H1 (cell line): ENCODE measurements at regions of chr2 and their contacts with region 1.

Region 1: GRCh38 chr2:96951093-96951654 is 35.2 kb downstream of the FAM178B start:
- DNase-seq: peak; percentile 75 to 90
- H3K4me3 ChIP-seq: no peak overlapping the region
- H3K27ac ChIP-seq: no peak overlapping the region
- H3K4me1 ChIP-seq: peaks cover 0 to 5% (median 2%) of the 10 kb centered on the region in 4 experiments; a peak in 4 of 7 replicates
- H3K27me3 ChIP-seq: peaks cover 0 to 5% (median 1%) of the 10 kb centered on the region in 4 experiments; a peak in 3 of 7 replicates
- CTCF ChIP-seq: peak; percentile 96 to 99 (median 96)
- EP300 ChIP-seq: no peak
- POLR2A ChIP-seq: no peak
- RAD21 ChIP-seq: peak; percentile 97 to 99

Region 2: DNA sequence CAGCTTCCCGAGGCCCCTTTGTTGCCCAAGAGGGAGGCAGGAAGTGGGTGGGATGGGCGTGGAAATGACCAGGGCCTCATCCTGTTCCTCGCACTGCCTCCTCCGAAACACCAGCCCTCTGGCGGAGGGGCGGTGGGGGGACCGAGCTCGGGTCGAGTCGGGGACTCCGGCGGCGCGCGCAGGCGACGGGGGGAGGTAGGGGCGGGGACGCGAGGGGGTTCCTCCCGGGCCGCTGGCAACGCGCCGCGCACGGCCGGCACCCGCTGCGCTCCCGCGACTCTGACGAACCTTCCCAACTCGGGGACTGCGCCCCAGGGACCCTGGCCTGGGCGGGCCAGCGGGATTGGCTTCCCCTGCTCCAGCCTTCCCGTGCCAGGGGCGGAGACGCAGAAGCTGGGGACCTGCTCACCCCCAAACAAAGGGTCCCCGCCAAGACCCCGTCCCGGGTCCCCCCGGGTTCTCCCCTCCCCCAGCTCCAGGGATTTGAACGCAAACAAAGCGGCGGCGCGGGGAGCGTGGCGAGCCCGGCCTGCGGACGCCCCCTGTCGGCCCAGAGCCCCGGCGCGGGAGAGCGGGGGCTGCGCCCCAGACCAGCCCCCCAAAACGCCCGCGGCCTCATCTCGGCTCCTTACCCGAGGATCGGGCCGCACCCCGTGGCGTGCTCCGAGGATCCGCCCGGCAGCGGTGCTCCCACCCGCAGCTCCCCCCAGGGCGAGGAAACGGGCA is 82.5 kb before region 1 on chr2:
- CTCF ChIA-PET with region 1: interaction called, 47 read pairs
- POLR2A ChIA-PET with region 1: interaction called, 6 read pairs
- DNase-seq: peak; percentile 43 to 86
- H3K4me3 ChIP-seq: peak overlapping the region; percentile 76 to 86 (median 80)
- H3K27ac ChIP-seq: peak overlapping the region; percentile 91
- H3K4me1 ChIP-seq: peaks cover 11 to 28% (median 18%) of the 10 kb centered on the region in 4 experiments
- H3K27me3 ChIP-seq: peaks cover 0 to 3% (median 0%) of the 10 kb centered on the region in 4 experiments; a peak in 2 of 7 replicates
- CTCF ChIP-seq: peak in 2 of 3 experiments; percentile 50 to 52; a peak in 3 of 4 replicates
- EP300 ChIP-seq: no peak
- POLR2A ChIP-seq: peak in 1 of 2 experiments; percentile 81; a peak in 2 of 3 replicates
- RAD21 ChIP-seq: peak; percentile 8 to 44; a peak in 2 of 4 replicates

Region 3: GRCh38 chr2:96888072-96889011 is 62.8 kb before region 1 on chr2:
- CTCF ChIA-PET with region 1: interaction called, 22 read pairs
- POLR2A ChIA-PET with region 1: no interaction called
- DNase-seq: no peak
- H3K4me3 ChIP-seq: no peak overlapping the region
- H3K27ac ChIP-seq: no peak overlapping the region
- H3K4me1 ChIP-seq: peaks cover 0 to 8% (median 5%) of the 10 kb centered on the region in 4 experiments; a peak in 4 of 7 replicates
- H3K27me3 ChIP-seq: peaks cover 0 to 2% (median 0%) of the 10 kb centered on the region in 4 experiments; a peak in 1 of 7 replicates
- CTCF ChIP-seq: no peak
- EP300 ChIP-seq: no peak
- POLR2A ChIP-seq: no peak
- RAD21 ChIP-seq: no peak

Region 4: DNA sequence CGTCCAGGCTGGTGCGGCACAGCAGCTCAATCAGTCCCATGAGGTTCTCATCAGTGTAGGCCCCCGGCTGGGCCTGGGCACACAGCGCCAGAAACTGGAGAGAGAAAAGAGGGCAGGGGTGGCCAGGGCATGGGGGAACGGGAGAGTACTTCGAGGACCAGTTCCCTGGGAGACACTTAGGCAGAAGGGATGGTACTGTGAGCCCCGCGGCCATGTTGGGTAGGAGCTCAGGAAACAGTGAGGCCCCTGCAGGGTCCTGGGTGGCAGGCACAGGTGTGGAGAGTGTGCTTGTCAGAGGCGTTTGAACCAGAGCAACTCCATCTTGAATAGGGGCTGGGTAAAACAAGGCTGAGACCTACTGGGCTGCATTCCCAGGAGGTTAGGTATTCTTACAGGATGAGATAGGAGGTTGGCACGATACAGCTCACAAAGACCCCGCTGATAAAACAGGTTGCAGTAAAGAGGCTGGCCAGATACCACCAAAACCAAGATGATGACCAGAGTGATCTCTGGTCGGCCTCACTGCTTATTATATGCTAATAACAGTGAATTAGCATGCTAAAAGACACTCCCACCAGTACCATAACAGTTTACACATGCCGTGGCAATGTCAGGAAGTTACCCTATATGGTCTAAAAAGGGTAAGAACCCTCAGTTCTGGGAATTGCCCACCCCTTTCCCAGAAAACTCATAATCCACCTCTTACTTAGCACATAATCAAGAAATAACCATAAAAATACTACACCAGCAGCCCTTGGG is 29.4 kb before region 1 on chr2:
- CTCF ChIA-PET with region 1: interaction called, 24 read pairs
- POLR2A ChIA-PET with region 1: interaction called, 5 read pairs
- DNase-seq: no peak
- H3K4me3 ChIP-seq: no peak overlapping the region
- H3K27ac ChIP-seq: no peak overlapping the region
- H3K4me1 ChIP-seq: peaks cover 0 to 15% (median 8%) of the 10 kb centered on the region in 4 experiments; a peak in 6 of 7 replicates
- H3K27me3 ChIP-seq: no peaks in the 10 kb centered on the region
- CTCF ChIP-seq: no peak
- EP300 ChIP-seq: no peak
- POLR2A ChIP-seq: no peak
- RAD21 ChIP-seq: no peak

Region 5: GRCh38 chr2:96933305-96934181 is 17.6 kb before region 1 on chr2:
- CTCF ChIA-PET with region 1: interaction called, 58 read pairs
- POLR2A ChIA-PET with region 1: no interaction called
- DNase-seq: no peak
- H3K4me3 ChIP-seq: no peak overlapping the region
- H3K27ac ChIP-seq: no peak overlapping the region
- H3K4me1 ChIP-seq: peaks cover 0 to 2% (median under 1%) of the 10 kb centered on the region in 4 experiments; a peak in 2 of 7 replicates
- H3K27me3 ChIP-seq: no peaks in the 10 kb centered on the region
- CTCF ChIP-seq: no peak
- EP300 ChIP-seq: no peak
- POLR2A ChIP-seq: no peak
- RAD21 ChIP-seq: no peak